Naive thymus-derived CD4-positive, alpha-beta T cell (primary cell): ENCODE measurements at regions of chr7 and their contacts with region 1.

Region 1: DNA sequence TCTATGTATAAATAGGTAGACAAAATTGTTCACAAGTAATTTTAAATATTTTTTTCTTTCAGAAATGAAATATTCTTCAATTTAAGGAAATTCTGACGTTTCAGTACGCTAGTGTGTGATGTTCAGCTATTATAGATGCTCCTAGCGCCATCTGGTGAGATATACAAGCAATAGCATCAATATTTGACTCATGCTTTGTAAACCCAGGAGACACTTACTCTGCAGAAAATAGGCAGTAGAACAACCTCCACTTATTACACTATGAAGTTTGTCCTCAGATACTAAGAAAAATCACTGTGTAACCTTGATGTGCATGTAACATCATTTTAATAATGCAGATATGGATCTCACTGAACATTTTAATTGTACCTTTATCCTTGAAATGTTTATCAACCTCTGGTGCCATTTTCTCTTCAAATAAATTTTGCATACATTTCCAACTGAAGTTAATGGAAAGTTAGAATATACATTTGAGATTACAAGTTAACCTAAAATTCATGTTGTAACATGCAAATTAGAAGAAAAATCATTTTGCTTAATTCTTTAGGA is 151.5 kb upstream of the FAM3C start:
- DNase-seq: peak in 7 of 9 donors; percentile 19 to 58 (median 48)
- ATAC-seq: peak; percentile 90
- H3K4me3 ChIP-seq: no peak overlapping the region
- H3K4me3 Mint-ChIP-seq: no peak overlapping the region
- H3K27ac ChIP-seq: no peak overlapping the region
- H3K27ac Mint-ChIP-seq: no peak overlapping the region
- H3K4me1 ChIP-seq: no peaks in the 10 kb centered on the region
- H3K4me1 Mint-ChIP-seq: peaks cover 0 to 38% (median 0%) of the 10 kb centered on the region in 7 donors
- H3K27me3 ChIP-seq: no peaks in the 10 kb centered on the region
- H3K27me3 Mint-ChIP-seq: peaks cover 0 to 2% (median 0%) of the 10 kb centered on the region in 5 donors

Region 2: GRCh38 chr7:120805636-120806388 is 741.8 kb before region 1 on chr7:
- CTCF ChIA-PET with region 1: no interaction called
- POLR2A ChIA-PET with region 1: no interaction called
- intact Hi-C with region 1: loop called in 1 of 2 experiments (anchors 10 kb)
- DNase-seq: peak; percentile 6 to 57 (median 38)
- ATAC-seq: peak; percentile 62
- H3K4me3 ChIP-seq: no peak overlapping the region
- H3K4me3 Mint-ChIP-seq: no peak overlapping the region
- H3K27ac ChIP-seq: no peak overlapping the region
- H3K27ac Mint-ChIP-seq: no peak overlapping the region
- H3K4me1 ChIP-seq: no peaks in the 10 kb centered on the region
- H3K4me1 Mint-ChIP-seq: no peaks in the 10 kb centered on the region
- H3K27me3 ChIP-seq: no peaks in the 10 kb centered on the region
- H3K27me3 Mint-ChIP-seq: peaks cover 0 to 10% (median 6%) of the 10 kb centered on the region in 5 donors

Region 3: DNA sequence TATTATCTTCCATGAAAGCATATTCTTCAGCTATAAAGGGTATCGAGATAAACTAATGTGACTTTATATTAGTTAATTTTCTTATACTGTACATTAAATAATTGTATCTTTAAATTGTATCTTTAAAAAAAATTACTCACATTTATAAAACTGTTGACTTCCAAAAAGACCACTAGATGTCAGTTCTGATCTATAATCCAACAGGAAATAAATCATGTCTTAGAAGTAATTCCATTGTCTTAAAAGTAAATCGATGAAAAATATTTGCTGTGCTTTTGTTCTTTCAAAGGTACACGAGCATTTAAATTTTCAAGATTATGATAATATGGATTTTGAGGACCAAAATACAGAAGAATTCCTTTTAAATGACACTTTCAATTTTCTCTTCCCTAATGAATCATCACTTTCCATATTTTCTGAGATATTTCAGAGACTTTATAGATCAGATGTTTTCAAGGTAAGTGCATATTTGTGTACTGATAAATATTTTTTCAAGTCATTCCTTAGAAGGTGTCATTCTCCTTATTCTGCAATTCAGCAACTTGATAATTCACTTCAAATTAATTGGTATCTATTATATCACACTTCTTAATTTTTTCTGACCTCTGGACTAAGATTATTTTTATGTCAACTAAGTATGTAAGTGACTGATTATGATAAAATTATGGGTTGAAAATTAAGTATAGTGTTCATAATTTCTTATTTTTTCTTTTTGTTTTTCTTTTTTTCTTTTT is 420.6 kb before region 1 on chr7:
- CTCF ChIA-PET with region 1: no interaction called
- POLR2A ChIA-PET with region 1: no interaction called
- intact Hi-C with region 1: loop called in 1 of 2 experiments (anchors 2 kb)
- DNase-seq: no peak
- ATAC-seq: no peak
- H3K4me3 ChIP-seq: no peak overlapping the region
- H3K4me3 Mint-ChIP-seq: no peak overlapping the region
- H3K27ac ChIP-seq: no peak overlapping the region
- H3K27ac Mint-ChIP-seq: no peak overlapping the region
- H3K4me1 ChIP-seq: no peaks in the 10 kb centered on the region
- H3K4me1 Mint-ChIP-seq: no peaks in the 10 kb centered on the region
- H3K27me3 ChIP-seq: no peaks in the 10 kb centered on the region
- H3K27me3 Mint-ChIP-seq: peaks cover 0 to 18% (median 7%) of the 10 kb centered on the region in 5 donors

Region 4: DNA sequence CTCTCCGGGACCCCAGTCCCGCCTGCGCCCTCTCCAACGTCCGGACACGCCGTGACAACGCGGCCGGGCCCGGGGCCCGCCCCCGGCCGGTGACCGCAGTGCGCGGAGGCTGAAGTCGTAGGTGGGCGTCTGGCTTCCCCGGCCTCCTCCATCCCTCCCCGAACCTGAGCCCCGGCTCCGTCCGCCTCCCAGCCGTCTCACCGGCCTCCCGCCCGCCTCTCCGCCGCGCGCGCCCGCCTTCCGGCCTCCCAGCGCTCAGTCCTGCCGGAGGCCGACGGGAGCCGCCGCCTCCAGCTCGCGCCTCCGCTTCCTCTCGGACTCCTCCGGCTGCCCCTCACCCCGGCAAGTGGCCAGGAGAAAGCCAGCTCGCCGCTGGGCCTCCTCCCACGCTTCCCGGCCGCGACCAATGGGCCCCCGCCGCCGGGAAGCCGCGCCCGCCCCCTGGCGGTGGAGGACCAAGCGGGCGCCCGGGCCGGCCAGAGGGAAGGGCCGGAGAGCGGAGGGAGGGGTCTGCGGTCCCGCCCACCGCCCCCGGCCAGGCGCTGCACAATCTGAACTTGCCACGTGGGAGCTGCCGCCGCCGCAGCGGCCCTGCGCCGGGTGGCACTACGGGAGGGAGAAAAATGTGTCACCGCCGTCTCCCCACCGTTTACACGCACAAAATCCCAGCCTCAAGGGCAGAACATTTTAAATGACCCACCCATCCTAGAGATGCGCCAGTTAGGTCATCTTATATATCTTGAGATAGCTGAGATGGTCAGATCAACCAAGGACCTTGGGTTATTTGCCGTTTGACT is 151.5 kb before region 1 on chr7 and contains the start of gene FAM3C:
- CTCF ChIA-PET with region 1: interaction called, 5 read pairs
- POLR2A ChIA-PET with region 1: no interaction called
- intact Hi-C with region 1: loop called (anchors 1 kb)
- DNase-seq: peak; percentile 51 to 98 (median 65)
- ATAC-seq: peak; percentile 95
- H3K4me3 ChIP-seq: peak within 1 kb of the TSS; percentile 72
- H3K4me3 Mint-ChIP-seq: peak within 1 kb of the TSS; percentile 82 to 93 (median 88)
- H3K27ac ChIP-seq: peak within 1 kb of the TSS; percentile 78
- H3K27ac Mint-ChIP-seq: peak within 1 kb of the TSS; percentile 36 to 92 (median 84)
- H3K4me1 ChIP-seq: peaks cover 0 to 3% of the 10 kb centered on the region in 2 donors
- H3K4me1 Mint-ChIP-seq: peaks cover 14 to 44% (median 34%) of the 10 kb centered on the region in 7 donors
- H3K27me3 ChIP-seq: no peaks in the 10 kb centered on the region
- H3K27me3 Mint-ChIP-seq: no peaks in the 10 kb centered on the region
- total RNA-seq, gene FAM3C: 11.1 to 28.4 (median 21.0) TPM

Region 5: GRCh38 chr7:121500360-121501058 is 47.1 kb before region 1 on chr7:
- CTCF ChIA-PET with region 1: no interaction called
- POLR2A ChIA-PET with region 1: no interaction called
- intact Hi-C with region 1: loop called in 1 of 2 experiments (anchors 2 kb)
- DNase-seq: no peak
- ATAC-seq: no peak
- H3K4me3 ChIP-seq: no peak overlapping the region
- H3K4me3 Mint-ChIP-seq: no peak overlapping the region
- H3K27ac ChIP-seq: no peak overlapping the region
- H3K27ac Mint-ChIP-seq: no peak overlapping the region
- H3K4me1 ChIP-seq: no peaks in the 10 kb centered on the region
- H3K4me1 Mint-ChIP-seq: peaks cover 0 to 17% (median 0%) of the 10 kb centered on the region in 7 donors
- H3K27me3 ChIP-seq: no peaks in the 10 kb centered on the region
- H3K27me3 Mint-ChIP-seq: peaks cover 0 to 12% (median 0%) of the 10 kb centered on the region in 5 donors

Region 6: GRCh38 chr7:121994625-121995410 is 447.2 kb after region 1 on chr7:
- CTCF ChIA-PET with region 1: no interaction called
- POLR2A ChIA-PET with region 1: no interaction called
- intact Hi-C with region 1: loop called (anchors 10 kb)
- DNase-seq: peak in 2 of 9 donors; percentile 5 to 36
- ATAC-seq: peak; percentile 68
- H3K4me3 ChIP-seq: no peak overlapping the region
- H3K4me3 Mint-ChIP-seq: no peak overlapping the region
- H3K27ac ChIP-seq: no peak overlapping the region
- H3K27ac Mint-ChIP-seq: no peak overlapping the region
- H3K4me1 ChIP-seq: no peaks in the 10 kb centered on the region
- H3K4me1 Mint-ChIP-seq: peaks cover 0 to 2% (median 0%) of the 10 kb centered on the region in 7 donors
- H3K27me3 ChIP-seq: no peaks in the 10 kb centered on the region
- H3K27me3 Mint-ChIP-seq: peaks cover 0 to 4% (median 0%) of the 10 kb centered on the region in 5 donors